Vagina (tissue), 2 donors: ENCODE measurements at regions of chr17 and their contacts with region 1.

Region 1: GRCh38 chr17:71633391-71633849 is 487.4 kb upstream of the SOX9 start:
- DNase-seq: no peak
- H3K4me3 ChIP-seq: no peak overlapping the region
- H3K27ac ChIP-seq: no peak overlapping the region
- H3K4me1 ChIP-seq: no peaks in the 10 kb centered on the region
- H3K27me3 ChIP-seq: no peaks in the 10 kb centered on the region
- CTCF ChIP-seq: no peak
- POLR2A ChIP-seq: no peak

Region 2: DNA sequence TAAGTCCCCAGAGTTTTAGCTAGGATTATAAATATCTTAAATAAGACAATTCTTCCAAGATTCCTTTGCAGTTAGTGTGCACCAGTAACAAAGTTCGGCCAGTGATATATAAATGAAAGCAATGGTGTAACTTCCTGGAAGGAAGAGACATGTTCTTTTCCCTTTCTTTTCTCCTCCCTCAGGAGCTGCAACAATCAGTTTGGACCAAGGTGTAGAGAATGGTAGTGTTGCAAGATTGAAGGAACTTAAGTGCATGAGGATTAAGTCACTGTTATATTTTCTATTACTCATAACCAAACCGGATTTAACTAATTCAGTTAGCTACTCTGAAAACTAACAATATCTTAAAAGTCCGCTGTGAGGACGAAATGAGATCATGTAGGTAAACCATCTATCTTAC is 1627.3 kb before region 1 on chr17:
- intact Hi-C with region 1: loop called (anchors 5 kb)
- DNase-seq: no peak
- H3K4me3 ChIP-seq: no peak overlapping the region
- H3K27ac ChIP-seq: no peak overlapping the region
- H3K4me1 ChIP-seq: no peaks in the 10 kb centered on the region
- H3K27me3 ChIP-seq: no peaks in the 10 kb centered on the region
- CTCF ChIP-seq: no peak
- POLR2A ChIP-seq: no peak

Region 3: GRCh38 chr17:71316176-71316897 is 317.1 kb before region 1 on chr17:
- intact Hi-C with region 1: no loop called
- DNase-seq: no peak
- H3K4me3 ChIP-seq: no peak overlapping the region
- H3K27ac ChIP-seq: no peak overlapping the region
- H3K4me1 ChIP-seq: no peaks in the 10 kb centered on the region
- H3K27me3 ChIP-seq: no peaks in the 10 kb centered on the region
- CTCF ChIP-seq: no peak
- POLR2A ChIP-seq: no peak

Region 4: DNA sequence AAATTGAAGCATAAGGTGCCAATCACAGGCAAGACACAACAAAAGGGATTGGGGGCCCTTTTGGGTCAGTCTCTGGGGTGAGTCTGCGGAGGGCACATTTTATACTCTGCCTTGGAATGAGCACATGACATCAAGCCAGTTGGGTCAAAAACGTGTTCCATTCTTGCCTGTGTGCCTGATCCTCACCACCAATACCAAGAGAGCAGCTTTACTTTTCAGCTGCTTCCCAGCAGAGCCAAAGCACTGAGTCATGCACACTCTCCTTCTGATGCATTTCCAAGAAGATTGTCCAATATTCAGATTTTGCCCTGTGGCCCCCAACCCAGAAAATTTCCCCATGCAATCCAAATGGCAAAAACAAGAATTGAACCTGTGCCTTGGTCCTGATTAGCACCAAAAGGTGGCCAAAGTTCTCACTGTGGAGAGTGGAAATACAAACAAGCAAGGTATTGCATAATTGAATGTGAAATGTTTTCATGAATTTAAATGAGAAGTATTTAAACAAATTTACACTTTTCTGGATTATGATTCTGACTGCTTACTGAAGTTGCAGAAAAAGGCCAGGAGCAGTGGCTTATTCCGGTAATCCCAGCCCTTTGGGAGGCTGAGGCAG is 269.6 kb after region 1 on chr17:
- intact Hi-C with region 1: no loop called
- DNase-seq: no peak
- H3K4me3 ChIP-seq: no peak overlapping the region
- H3K27ac ChIP-seq: no peak overlapping the region
- H3K4me1 ChIP-seq: no peaks in the 10 kb centered on the region
- H3K27me3 ChIP-seq: no peaks in the 10 kb centered on the region
- CTCF ChIP-seq: no peak
- POLR2A ChIP-seq: no peak